Endothelial cell of umbilical vein (primary cell): ENCODE measurements at regions of chr18 and their contacts with region 1.

Region 1: DNA sequence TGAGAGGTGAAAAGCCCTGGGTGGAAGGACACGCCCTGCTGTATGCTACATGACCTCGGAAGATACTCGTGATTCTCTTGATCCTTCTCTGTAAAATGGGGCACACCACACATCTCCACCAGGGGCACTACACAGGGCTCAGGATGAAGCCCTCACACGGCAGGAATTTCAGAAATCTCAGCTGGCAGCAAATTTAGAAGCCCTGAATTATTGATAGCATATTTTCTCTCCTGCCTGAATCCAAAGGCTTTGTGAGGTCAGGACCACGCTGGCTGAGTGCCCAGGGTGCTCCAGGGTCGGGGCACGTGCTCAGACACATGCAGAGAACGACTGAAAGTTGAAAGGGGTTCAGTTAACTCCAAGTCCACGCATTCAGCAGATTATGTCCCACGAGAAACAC is 42.1 kb upstream of the GALR1 start:
- DNase-seq: peak; percentile 51
- H3K4me3 ChIP-seq: no peak overlapping the region
- H3K27ac ChIP-seq: no peak overlapping the region
- H3K4me1 ChIP-seq: no peaks in the 10 kb centered on the region
- H3K27me3 ChIP-seq: peaks cover 0 to 2% of the 10 kb centered on the region in 2 experiments
- CTCF ChIP-seq: peak; percentile 65 to 67
- POLR2A ChIP-seq: no peak

Region 2: GRCh38 chr18:76803814-76804213 is 403.7 kb before region 1 on chr18:
- CTCF ChIA-PET with region 1: interaction called, 28 read pairs
- POLR2A ChIA-PET with region 1: no interaction called
- dilution Hi-C with region 1: no loop called
- intact Hi-C with region 1: loop called (anchors 10 kb)
- DNase-seq: peak; percentile 63
- H3K4me3 ChIP-seq: peak overlapping the region in 1 of 3 experiments; percentile 40
- H3K27ac ChIP-seq: no peak overlapping the region
- H3K4me1 ChIP-seq: peaks cover 9% of the 10 kb centered on the region
- H3K27me3 ChIP-seq: no peaks in the 10 kb centered on the region
- CTCF ChIP-seq: peak; percentile 82 to 85
- POLR2A ChIP-seq: no peak

Region 3: DNA sequence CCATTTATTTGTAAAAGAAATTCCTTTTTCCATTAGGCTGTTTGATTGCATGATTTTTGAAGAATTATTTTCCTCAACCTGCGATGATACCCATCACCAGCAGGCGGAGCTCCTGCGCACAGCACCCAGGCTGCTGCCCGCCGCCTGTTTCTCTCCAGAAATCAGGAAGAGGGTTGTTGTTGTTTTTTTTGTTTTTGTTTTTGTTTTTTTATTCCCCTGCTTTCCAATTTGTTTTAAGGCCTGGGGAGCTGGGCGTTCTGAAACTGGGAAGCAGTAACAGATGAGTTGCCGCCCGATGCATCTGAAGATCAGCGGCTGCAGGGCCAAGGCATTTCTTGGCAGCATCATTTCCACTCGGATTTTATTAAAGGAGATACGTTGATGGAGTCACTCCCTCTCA is 207.0 kb before region 1 on chr18:
- CTCF ChIA-PET with region 1: interaction called, 246 read pairs
- POLR2A ChIA-PET with region 1: no interaction called
- dilution Hi-C with region 1: no loop called
- intact Hi-C with region 1: loop called (anchors 1 kb)
- DNase-seq: peak; percentile 46
- H3K4me3 ChIP-seq: no peak overlapping the region
- H3K27ac ChIP-seq: no peak overlapping the region
- H3K4me1 ChIP-seq: no peaks in the 10 kb centered on the region
- H3K27me3 ChIP-seq: peaks cover 1 to 8% of the 10 kb centered on the region in 2 experiments
- CTCF ChIP-seq: peak; percentile 90 to 94
- POLR2A ChIP-seq: no peak

Region 4: GRCh38 chr18:77061946-77062517 is 145.5 kb before region 1 on chr18:
- CTCF ChIA-PET with region 1: interaction called, 47 read pairs
- POLR2A ChIA-PET with region 1: no interaction called
- dilution Hi-C with region 1: no loop called
- intact Hi-C with region 1: loop called (anchors 1 kb)
- DNase-seq: no peak
- H3K4me3 ChIP-seq: no peak overlapping the region
- H3K27ac ChIP-seq: no peak overlapping the region
- H3K4me1 ChIP-seq: peaks cover 21% of the 10 kb centered on the region
- H3K27me3 ChIP-seq: no peaks in the 10 kb centered on the region
- CTCF ChIP-seq: no peak
- POLR2A ChIP-seq: no peak

Region 5: GRCh38 chr18:77101410-77102258 is 105.9 kb before region 1 on chr18:
- CTCF ChIA-PET with region 1: interaction called, 14 read pairs
- POLR2A ChIA-PET with region 1: no interaction called
- dilution Hi-C with region 1: no loop called
- intact Hi-C with region 1: no loop called
- DNase-seq: peak; percentile 91
- H3K4me3 ChIP-seq: peak overlapping the region in 1 of 3 experiments; percentile 6
- H3K27ac ChIP-seq: peak overlapping the region; percentile 96
- H3K4me1 ChIP-seq: peaks cover 45% of the 10 kb centered on the region
- H3K27me3 ChIP-seq: no peaks in the 10 kb centered on the region
- CTCF ChIP-seq: no peak
- POLR2A ChIP-seq: peak; percentile 52

Region 6: GRCh38 chr18:77223653-77224052 is 16.1 kb after region 1 on chr18:
- CTCF ChIA-PET with region 1: interaction called, 16 read pairs
- POLR2A ChIA-PET with region 1: no interaction called
- dilution Hi-C with region 1: no loop called
- intact Hi-C with region 1: no loop called
- DNase-seq: no peak
- H3K4me3 ChIP-seq: no peak overlapping the region
- H3K27ac ChIP-seq: no peak overlapping the region
- H3K4me1 ChIP-seq: no peaks in the 10 kb centered on the region
- H3K27me3 ChIP-seq: no peaks in the 10 kb centered on the region
- CTCF ChIP-seq: no peak
- POLR2A ChIP-seq: no peak

Region 7: GRCh38 chr18:77234504-77235365 is 27.2 kb after region 1 on chr18:
- CTCF ChIA-PET with region 1: no interaction called
- POLR2A ChIA-PET with region 1: no interaction called
- dilution Hi-C with region 1: no loop called
- intact Hi-C with region 1: no loop called
- DNase-seq: no peak
- H3K4me3 ChIP-seq: no peak overlapping the region
- H3K27ac ChIP-seq: no peak overlapping the region
- H3K4me1 ChIP-seq: no peaks in the 10 kb centered on the region
- H3K27me3 ChIP-seq: no peaks in the 10 kb centered on the region
- CTCF ChIP-seq: no peak
- POLR2A ChIP-seq: no peak

Region 8: DNA sequence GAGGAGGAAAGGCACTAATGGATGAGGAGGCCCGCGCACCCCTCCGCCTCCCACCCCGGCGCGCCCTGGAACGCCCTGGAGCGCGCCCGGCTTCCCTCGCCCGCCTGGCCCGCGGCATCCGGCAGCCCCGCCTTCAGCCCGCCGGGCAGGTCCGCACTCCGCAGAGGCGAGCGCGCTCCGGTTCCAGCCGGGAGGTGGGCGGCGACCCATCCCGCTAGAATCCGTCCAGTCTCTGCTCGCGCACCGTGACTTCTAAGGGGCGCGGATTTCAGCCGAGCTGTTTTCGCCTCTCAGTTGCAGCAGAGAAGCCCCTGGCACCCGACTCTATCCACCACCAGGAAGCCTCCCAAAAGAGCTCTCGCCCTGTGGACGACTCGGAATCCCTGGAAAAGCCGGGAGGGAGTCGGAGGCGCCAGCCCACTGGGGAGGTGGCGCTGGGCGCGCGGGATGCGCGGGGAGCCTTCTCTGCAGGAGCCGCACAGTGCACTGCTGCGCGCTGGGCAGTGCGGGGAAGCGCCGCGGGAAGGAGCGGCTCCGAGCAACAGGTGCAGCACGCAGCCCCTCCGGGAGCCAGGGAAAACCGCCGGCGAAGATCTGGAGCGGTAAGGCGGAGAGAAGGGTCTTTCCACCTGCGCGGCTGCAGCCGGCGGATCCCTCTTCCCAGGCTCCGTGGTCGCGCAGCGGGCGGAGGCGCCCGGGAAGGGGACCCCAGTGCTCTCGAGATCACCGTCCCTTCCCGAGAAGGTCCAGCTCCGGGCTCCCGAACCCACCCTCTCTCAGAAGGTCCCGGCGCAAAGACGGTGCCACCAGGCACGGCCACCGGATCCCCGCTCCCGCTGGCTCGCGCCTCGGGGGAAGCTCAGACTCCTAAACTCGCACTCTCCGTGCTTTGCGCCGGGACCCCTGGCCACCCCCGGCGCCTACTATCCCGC is 42.3 kb after region 1 on chr18 and contains the start of gene GALR1:
- CTCF ChIA-PET with region 1: no interaction called
- POLR2A ChIA-PET with region 1: no interaction called
- dilution Hi-C with region 1: no loop called
- intact Hi-C with region 1: no loop called
- DNase-seq: no peak
- H3K4me3 ChIP-seq: no peak within 1 kb of the TSS
- H3K27ac ChIP-seq: no peak within 1 kb of the TSS
- H3K4me1 ChIP-seq: no peaks in the 10 kb centered on the region
- H3K27me3 ChIP-seq: peaks cover 21 to 34% of the 10 kb centered on the region in 2 experiments
- CTCF ChIP-seq: no peak
- POLR2A ChIP-seq: no peak
- total RNA-seq, gene GALR1: not detected in 2 replicates

Region 9: GRCh38 chr18:77495982-77496690 is 288.6 kb after region 1 on chr18:
- CTCF ChIA-PET with region 1: no interaction called
- POLR2A ChIA-PET with region 1: no interaction called
- dilution Hi-C with region 1: no loop called
- intact Hi-C with region 1: no loop called
- DNase-seq: no peak
- H3K4me3 ChIP-seq: no peak overlapping the region
- H3K27ac ChIP-seq: no peak overlapping the region
- H3K4me1 ChIP-seq: no peaks in the 10 kb centered on the region
- H3K27me3 ChIP-seq: no peaks in the 10 kb centered on the region
- CTCF ChIP-seq: no peak
- POLR2A ChIP-seq: no peak